ENCODE measurements at regions of chr11 and their contacts with region 1.

Region 1: GRCh38 chr11:61516675-61517572 is 8.4 kb downstream of the LRRC10B start:
- DNase-seq: peak in 4 of 10 donors; percentile 28 to 73 (median 50)
- H3K4me3 ChIP-seq: peak overlapping the region in 9 of 59 donors; percentile 3 to 28 (median 20)
- H3K27ac ChIP-seq: peak overlapping the region in 42 of 59 donors; percentile 0 to 79 (median 45)
- H3K27me3 ChIP-seq: peaks cover 0 to 9% (median 0%) of the 10 kb centered on the region in 45 donors
- CTCF ChIP-seq: peak; percentile 86 to 99 (median 97)

Region 2: GRCh38 chr11:61446211-61446651 is 70.7 kb before region 1 on chr11:
- intact Hi-C with region 1: loop called (anchors 1 to 5 kb)
- DNase-seq: peak; percentile 71 to 98 (median 94)
- H3K4me3 ChIP-seq: peak overlapping the region in 1 of 59 donors; percentile 22
- H3K27ac ChIP-seq: peak overlapping the region in 57 of 59 donors; percentile 53 to 98 (median 86)
- H3K27me3 ChIP-seq: no peaks in the 10 kb centered on the region
- CTCF ChIP-seq: peak; percentile 65 to 96 (median 90)

Region 3: GRCh38 chr11:61477727-61478148 is 39.2 kb before region 1 on chr11:
- intact Hi-C with region 1: loop called (anchors 2 to 5 kb)
- DNase-seq: peak in 7 of 10 donors; percentile 30 to 75 (median 50)
- H3K4me3 ChIP-seq: peak overlapping the region in 6 of 59 donors; percentile 1 to 28 (median 10)
- H3K27ac ChIP-seq: peak overlapping the region in 13 of 59 donors; percentile 1 to 73 (median 28)
- H3K27me3 ChIP-seq: no peaks in the 10 kb centered on the region
- CTCF ChIP-seq: peak; percentile 82 to 98 (median 94)

Measured in dorsolateral prefrontal cortex (tissue), 120 donors.